ENCODE measurements at regions of chr3 and their contacts with region 1.

Region 1: DNA sequence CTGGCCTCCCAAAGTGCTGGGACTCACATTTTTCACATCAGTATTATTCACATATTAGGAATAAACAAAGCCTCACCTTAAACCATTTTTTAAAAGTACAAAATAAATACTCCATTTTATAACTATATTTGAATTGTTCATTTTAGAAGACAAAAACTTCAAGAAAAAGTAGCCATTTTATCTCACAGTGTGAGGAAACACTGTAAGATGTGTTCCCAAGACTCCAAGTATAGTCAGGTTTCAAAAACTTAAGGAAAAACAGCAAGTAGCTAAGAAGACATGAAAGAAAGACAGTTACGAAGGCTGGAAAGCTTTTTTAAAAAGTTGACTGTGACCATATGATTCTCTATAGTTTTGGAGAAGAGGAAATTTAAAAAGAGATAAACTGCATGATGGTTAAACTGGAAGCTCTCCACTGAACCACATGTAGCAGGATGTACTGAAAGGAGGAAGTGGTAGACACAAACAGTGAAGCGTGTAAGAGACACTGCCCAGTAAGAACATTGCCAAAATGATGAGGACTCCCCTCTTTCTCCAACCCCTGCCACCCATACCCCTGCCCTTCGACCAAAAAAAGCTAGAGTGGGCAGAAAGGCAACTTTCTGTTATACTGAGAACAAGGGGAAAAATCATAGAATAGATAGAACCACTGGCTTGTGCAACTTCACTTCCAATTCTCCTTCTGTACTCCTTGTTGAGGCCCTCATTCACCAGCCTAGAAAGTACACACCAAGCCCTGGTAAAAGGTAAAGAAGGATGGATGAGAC is 6.2 kb upstream of the TMF1 start:
- DNase-seq: peak in 3 of 10 donors; percentile 49 to 59 (median 56)
- ATAC-seq: peak; percentile 96 to 98
- H3K4me3 Mint-ChIP-seq: peak overlapping the region in 9 of 10 donors; percentile 13 to 72 (median 61)
- H3K27ac Mint-ChIP-seq: peak overlapping the region; percentile 80 to 97 (median 92)
- H3K4me1 Mint-ChIP-seq: peaks cover 12 to 38% (median 24%) of the 10 kb centered on the region in 4 donors
- H3K27me3 Mint-ChIP-seq: no peaks in the 10 kb centered on the region

Region 2: GRCh38 chr3:69044608-69045007 is 13.8 kb before region 1 on chr3:
- POLR2A ChIA-PET with region 1: no interaction called
- DNase-seq: no peak
- ATAC-seq: no peak
- H3K4me3 Mint-ChIP-seq: no peak overlapping the region
- H3K27ac Mint-ChIP-seq: peak overlapping the region in 3 of 10 donors; percentile 3 to 37 (median 29)
- H3K4me1 Mint-ChIP-seq: peaks cover 17 to 36% (median 31%) of the 10 kb centered on the region in 4 donors
- H3K27me3 Mint-ChIP-seq: no peaks in the 10 kb centered on the region

Region 3: GRCh38 chr3:69084326-69085167 is 26.2 kb after region 1 on chr3 and contains the start of gene ARL6IP5:
- POLR2A ChIA-PET with region 1: interaction called, 63 read pairs
- DNase-seq: peak; percentile 81 to 95 (median 89)
- ATAC-seq: peak; percentile 72 to 77
- H3K4me3 Mint-ChIP-seq: peak within 1 kb of the TSS; percentile 93 to 99 (median 97)
- H3K27ac Mint-ChIP-seq: peak within 1 kb of the TSS; percentile 84 to 99 (median 98)
- H3K4me1 Mint-ChIP-seq: peaks cover 33 to 79% (median 60%) of the 10 kb centered on the region in 4 donors
- H3K27me3 Mint-ChIP-seq: no peaks in the 10 kb centered on the region
- polyA plus RNA-seq, gene ARL6IP5: 315 to 450 (median 375) TPM